Aorta (tissue), 5 donors: ENCODE measurements at regions of chr3 and their contacts with region 1.

Region 1: DNA sequence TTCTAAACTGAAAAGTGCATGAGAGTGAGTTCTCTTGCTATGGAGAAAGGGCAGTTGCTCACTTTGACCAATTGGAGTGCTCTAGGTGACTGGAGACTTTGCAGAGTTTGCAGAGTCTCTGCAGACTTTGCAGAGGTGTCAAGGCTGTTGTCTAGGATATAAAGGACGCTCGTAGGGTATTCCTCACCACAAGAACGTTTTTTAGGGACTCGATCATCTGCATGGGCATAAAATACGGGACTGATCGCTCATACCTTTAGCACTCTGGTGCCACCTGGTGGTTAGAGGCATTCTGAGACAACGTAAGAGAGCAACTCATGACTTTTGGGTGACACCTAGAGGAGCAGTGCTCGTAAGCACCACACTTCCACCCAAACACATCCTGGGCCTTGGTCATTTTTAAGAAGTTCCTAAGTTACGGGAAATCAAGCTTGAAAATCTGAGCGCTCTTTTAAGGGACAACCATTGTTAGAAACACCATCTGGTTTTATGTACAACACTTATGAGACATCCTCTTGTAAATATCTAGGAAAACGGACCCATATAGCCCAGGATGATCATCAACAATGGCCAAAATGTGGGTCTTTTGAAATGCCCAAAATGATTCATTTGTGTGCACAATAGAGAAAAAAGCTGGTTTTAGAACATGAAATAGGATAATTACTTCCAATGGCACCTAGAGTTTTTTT is 51.6 kb upstream of the XCR1 start:
- DNase-seq: peak; percentile 91 to 92
- ATAC-seq: peak; percentile 93
- H3K4me3 ChIP-seq: no peak overlapping the region
- H3K27ac ChIP-seq: no peak overlapping the region
- H3K4me1 ChIP-seq: no peaks in the 10 kb centered on the region
- H3K27me3 ChIP-seq: no peaks in the 10 kb centered on the region

Region 2: DNA sequence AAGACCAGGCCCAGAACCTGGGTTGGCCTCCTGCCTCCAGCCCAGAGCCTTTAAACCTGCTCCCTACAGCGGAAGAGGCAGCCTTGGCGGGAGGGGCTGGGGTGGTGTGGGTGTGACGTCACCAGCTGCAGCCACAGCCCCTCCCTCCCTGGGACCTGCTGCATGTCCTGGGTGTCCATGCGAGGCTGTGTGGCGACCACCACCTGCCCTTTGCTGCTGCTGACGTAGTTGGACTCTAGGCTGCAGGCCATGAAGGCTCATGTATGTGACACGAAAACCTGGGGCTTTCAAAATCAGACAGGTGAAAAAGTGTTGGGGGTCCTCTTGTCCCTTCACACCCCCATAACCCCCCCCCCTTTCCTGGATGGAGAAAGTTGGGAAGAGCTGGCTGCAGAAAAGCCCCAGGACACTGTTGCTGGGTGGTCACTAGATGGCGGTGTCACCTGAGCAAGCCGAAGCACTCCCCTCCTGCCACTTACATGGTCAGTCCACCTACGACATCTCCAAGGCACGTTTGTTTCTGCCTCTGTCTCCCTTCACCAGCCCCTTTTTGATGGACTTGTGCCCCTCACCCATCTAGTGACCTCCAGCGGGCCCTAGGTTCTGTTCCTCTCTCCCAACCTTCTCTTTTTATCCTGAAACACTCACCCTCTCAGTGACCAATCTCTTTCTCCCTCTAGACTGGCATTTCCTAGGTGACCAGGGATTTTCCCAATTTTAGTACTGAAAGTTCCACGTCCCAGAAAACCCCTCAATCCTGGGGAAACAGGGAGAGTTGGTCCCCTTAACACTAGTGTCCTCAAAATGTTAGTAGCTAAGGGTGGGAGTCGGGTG is 317.8 kb before region 1 on chr3:
- intact Hi-C with region 1: loop called (anchors 5 to 10 kb)
- DNase-seq: no peak
- ATAC-seq: peak; percentile 62
- H3K4me3 ChIP-seq: no peak overlapping the region
- H3K27ac ChIP-seq: no peak overlapping the region
- H3K4me1 ChIP-seq: no peaks in the 10 kb centered on the region
- H3K27me3 ChIP-seq: no peaks in the 10 kb centered on the region

Region 3: DNA sequence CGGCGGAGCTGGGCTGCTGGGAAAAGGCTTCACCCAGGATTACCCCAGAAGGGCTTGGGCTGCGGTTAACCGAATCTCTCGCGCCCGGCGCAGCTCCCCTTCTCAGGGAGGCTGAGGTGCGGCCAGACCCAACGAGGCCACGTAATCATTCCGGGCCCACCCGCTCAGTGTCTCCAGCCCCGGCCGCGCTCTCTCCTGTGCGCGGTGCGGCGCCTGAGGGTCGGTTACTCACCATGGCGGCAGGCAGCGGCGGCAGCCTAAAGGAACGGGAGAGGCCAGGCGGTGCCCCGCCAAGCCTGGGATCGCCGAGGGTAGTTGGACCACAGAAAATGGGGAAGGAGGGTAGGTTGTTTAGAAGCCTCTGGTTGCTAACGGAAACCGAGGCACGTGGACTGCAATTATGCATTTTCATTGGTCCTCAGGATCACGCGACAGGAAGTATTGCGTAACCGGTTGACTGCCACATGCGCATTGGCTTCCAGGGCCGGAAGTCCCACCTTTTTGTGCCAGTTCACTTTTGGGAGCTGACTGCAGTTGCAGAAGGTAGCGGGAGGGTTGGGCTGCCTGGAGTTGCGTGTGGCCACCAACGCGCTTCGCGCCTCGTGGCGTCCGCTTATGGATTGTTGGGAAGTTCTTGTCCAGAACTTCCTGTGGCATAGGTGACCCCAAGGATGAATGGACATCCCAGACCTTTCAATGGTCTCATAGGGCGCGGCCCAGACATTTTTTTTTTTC is 236.9 kb before region 1 on chr3 and contains the start of gene LZTFL1:
- intact Hi-C with region 1: loop called in 1 of 2 experiments (anchors 2 kb)
- DNase-seq: peak; percentile 93 to 96
- ATAC-seq: peak; percentile 96
- H3K4me3 ChIP-seq: peak within 1 kb of the TSS; percentile 42 to 75
- H3K27ac ChIP-seq: no peak within 1 kb of the TSS
- H3K4me1 ChIP-seq: no peaks in the 10 kb centered on the region
- H3K27me3 ChIP-seq: no peaks in the 10 kb centered on the region
- total RNA-seq, gene LZTFL1: 9.8 to 16.3 TPM

Region 4: GRCh38 chr3:45938864-45939263 is 140.0 kb before region 1 on chr3:
- intact Hi-C with region 1: loop called (anchors 1 to 2 kb)
- DNase-seq: peak; percentile 86 to 92
- ATAC-seq: peak; percentile 92
- H3K4me3 ChIP-seq: no peak overlapping the region
- H3K27ac ChIP-seq: peak overlapping the region in 1 of 2 donors; percentile 15
- H3K4me1 ChIP-seq: no peaks in the 10 kb centered on the region
- H3K27me3 ChIP-seq: no peaks in the 10 kb centered on the region

Region 5: DNA sequence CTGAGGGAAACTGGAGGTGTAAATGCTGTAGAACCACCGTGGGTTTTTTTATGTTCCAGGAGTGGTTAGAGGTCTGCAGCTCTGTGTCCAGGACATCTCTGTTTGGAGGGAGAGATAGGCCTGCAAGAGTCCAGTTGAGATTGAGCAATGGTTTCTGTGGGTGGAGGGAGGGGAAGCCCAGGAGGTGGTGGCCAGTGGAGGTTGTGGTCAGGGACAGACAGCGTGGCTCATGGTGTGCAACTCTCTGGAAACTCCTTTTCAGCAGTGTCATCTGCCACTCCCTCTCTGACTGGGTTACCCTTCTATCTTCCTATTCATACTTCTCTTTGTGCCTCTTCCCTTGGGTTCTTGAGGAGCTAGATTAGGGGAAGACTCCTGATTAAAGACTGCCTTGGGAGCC is 61.1 kb before region 1 on chr3:
- intact Hi-C with region 1: no loop called
- DNase-seq: peak in 1 of 2 donors; percentile 61
- ATAC-seq: peak; percentile 36
- H3K4me3 ChIP-seq: no peak overlapping the region
- H3K27ac ChIP-seq: no peak overlapping the region
- H3K4me1 ChIP-seq: no peaks in the 10 kb centered on the region
- H3K27me3 ChIP-seq: no peaks in the 10 kb centered on the region

Region 6: GRCh38 chr3:46049116-46049515 is 29.7 kb before region 1 on chr3:
- intact Hi-C with region 1: loop called in 1 of 2 experiments (anchors 5 kb)
- DNase-seq: no peak
- ATAC-seq: no peak
- H3K4me3 ChIP-seq: no peak overlapping the region
- H3K27ac ChIP-seq: no peak overlapping the region
- H3K4me1 ChIP-seq: peaks cover 0 to 2% of the 10 kb centered on the region in 2 donors
- H3K27me3 ChIP-seq: no peaks in the 10 kb centered on the region